Activated naive CD4-positive, alpha-beta T cell treated with anti-CD3 and anti-CD28 coated beads for 36 hours (primary cell): ENCODE measurements at regions of chr2 and their contacts with region 1.

Region 1: DNA sequence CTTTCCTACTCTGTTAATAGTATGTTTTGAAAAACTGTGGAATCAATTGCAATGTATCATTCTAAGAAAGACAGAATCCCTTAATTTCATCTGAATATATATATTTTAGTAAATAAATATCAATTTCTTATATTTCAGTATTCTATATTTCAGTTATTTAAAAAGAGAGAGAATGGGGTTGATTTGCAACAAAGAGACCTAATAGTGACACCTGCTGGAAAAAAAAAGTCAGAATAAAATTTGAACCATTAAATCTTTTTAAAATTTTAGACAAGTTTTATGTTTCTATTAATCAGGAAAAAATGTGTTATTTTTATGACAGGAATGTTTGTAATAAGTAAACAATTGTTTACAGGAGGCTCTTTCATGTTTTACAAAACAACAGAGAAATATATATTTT is 20.7 kb upstream of the CCNT2 start:
- DNase-seq: no peak
- H3K4me3 Mint-ChIP-seq: no peak overlapping the region
- H3K27ac Mint-ChIP-seq: no peak overlapping the region
- H3K4me1 Mint-ChIP-seq: no peaks in the 10 kb centered on the region
- H3K27me3 Mint-ChIP-seq: no peaks in the 10 kb centered on the region

Region 2: GRCh38 chr2:133886735-133887660 is 1010.9 kb before region 1 on chr2:
- CTCF ChIA-PET with region 1: no interaction called
- intact Hi-C with region 1: loop called (anchors 10 kb)
- DNase-seq: peak; percentile 66
- H3K4me3 Mint-ChIP-seq: no peak overlapping the region
- H3K27ac Mint-ChIP-seq: no peak overlapping the region
- H3K4me1 Mint-ChIP-seq: no peaks in the 10 kb centered on the region
- H3K27me3 Mint-ChIP-seq: peaks cover 5% of the 10 kb centered on the region

Region 3: GRCh38 chr2:134027980-134028379 is 870.0 kb before region 1 on chr2:
- CTCF ChIA-PET with region 1: no interaction called
- intact Hi-C with region 1: no loop called
- DNase-seq: no peak
- H3K4me3 Mint-ChIP-seq: no peak overlapping the region
- H3K27ac Mint-ChIP-seq: no peak overlapping the region
- H3K4me1 Mint-ChIP-seq: no peaks in the 10 kb centered on the region
- H3K27me3 Mint-ChIP-seq: peaks cover 41% of the 10 kb centered on the region

Region 4: DNA sequence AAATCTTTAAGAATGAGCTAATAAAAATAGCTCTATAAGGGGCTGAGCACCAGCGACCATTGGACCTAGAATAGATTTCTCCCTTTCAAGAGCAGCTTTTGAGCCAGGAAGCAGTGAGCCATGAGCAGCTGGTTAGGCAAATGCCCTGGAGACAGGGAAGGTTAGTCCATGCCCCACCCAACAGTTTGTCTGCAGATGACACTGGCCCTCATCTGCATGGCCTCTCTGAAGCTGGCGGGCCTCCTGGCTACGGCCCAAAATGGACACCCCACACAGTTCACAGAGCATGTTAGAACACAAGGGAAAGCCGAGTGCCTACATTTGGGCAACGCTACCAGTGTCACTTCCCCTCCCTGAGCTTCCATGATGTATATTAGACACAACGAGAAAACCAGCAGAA is 443.0 kb before region 1 on chr2:
- CTCF ChIA-PET with region 1: interaction called, 7 read pairs
- intact Hi-C with region 1: loop called (anchors 1 kb)
- DNase-seq: no peak
- H3K4me3 Mint-ChIP-seq: no peak overlapping the region
- H3K27ac Mint-ChIP-seq: no peak overlapping the region
- H3K4me1 Mint-ChIP-seq: no peaks in the 10 kb centered on the region
- H3K27me3 Mint-ChIP-seq: no peaks in the 10 kb centered on the region

Region 5: DNA sequence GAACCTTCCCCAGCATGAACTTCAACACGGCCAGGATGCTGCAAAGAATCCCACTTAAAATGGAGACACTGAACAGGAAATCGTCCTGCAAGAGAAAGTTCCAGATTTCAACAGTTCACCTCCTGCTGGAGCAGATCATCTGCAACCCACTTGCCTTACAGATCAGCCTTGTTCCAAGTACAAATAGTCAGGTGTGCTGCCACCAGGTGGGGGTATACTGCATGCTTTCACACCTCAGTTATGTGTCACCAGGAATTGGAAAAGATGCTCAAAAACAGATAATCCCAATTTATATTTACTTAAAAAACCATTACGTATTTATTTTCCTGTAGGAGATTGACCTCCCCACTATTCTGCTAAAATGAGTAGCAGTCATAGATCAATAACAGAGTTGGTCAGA is 431.8 kb before region 1 on chr2:
- CTCF ChIA-PET with region 1: no interaction called
- intact Hi-C with region 1: loop called (anchors 2 kb)
- DNase-seq: peak; percentile 53
- H3K4me3 Mint-ChIP-seq: no peak overlapping the region
- H3K27ac Mint-ChIP-seq: no peak overlapping the region
- H3K4me1 Mint-ChIP-seq: no peaks in the 10 kb centered on the region
- H3K27me3 Mint-ChIP-seq: no peaks in the 10 kb centered on the region

Region 6: GRCh38 chr2:134574611-134575330 is 323.2 kb before region 1 on chr2:
- CTCF ChIA-PET with region 1: no interaction called
- intact Hi-C with region 1: loop called (anchors 5 kb)
- DNase-seq: no peak
- H3K4me3 Mint-ChIP-seq: no peak overlapping the region
- H3K27ac Mint-ChIP-seq: no peak overlapping the region
- H3K4me1 Mint-ChIP-seq: no peaks in the 10 kb centered on the region
- H3K27me3 Mint-ChIP-seq: no peaks in the 10 kb centered on the region

Region 7: DNA sequence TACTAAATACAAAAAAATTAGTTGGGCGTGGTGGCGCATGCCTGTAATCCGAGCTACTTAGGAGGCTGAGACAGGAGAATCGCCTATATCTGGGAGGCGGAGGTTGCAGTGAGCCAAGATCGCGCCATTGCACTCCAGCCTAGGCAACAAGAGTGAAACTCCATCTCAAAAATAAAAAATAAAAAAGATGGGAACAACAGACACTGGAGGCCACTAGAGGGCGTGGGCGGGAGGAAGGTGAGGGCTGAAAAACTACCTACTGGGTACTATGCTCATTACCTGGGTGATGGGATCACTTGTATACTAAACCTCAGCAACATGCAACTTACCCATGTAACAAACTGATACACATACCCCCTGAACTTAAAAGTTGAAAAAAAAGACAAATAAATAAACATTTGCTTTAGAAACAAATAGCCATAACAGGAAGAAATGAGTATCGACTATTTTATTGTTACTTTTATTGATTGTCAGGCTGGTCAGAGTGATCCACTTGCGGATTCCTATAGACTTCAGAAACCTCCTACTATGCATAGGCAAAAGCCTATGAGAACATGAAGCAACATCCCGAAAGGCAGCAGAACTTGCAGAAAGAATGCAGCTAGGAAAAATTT is 240.2 kb before region 1 on chr2:
- CTCF ChIA-PET with region 1: interaction called, 5 read pairs
- intact Hi-C with region 1: loop called (anchors 2 kb)
- DNase-seq: peak; percentile 57
- H3K4me3 Mint-ChIP-seq: no peak overlapping the region
- H3K27ac Mint-ChIP-seq: no peak overlapping the region
- H3K4me1 Mint-ChIP-seq: peaks cover 14% of the 10 kb centered on the region
- H3K27me3 Mint-ChIP-seq: no peaks in the 10 kb centered on the region

Region 8: DNA sequence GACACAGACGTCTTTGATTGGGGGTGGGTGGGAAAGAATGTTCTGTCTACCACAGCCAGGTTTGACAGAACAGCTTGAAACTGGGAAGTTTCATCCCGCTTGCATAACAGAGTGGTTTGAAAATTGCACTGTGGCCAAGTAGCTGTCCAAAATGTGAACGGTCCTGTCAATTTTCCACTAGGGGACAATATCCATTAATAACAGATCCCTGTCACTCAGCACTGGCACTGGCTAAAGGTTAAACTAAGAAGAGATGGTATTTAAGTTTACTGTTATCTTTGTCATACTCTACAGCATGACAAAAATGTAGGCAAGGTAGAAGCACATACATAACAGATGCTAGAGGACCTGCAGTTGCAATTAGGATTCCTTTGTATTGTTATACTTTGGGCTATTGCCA is 115.1 kb before region 1 on chr2:
- CTCF ChIA-PET with region 1: interaction called, 4 read pairs
- intact Hi-C with region 1: loop called (anchors 2 kb)
- DNase-seq: no peak
- H3K4me3 Mint-ChIP-seq: no peak overlapping the region
- H3K27ac Mint-ChIP-seq: no peak overlapping the region
- H3K4me1 Mint-ChIP-seq: peaks cover 10% of the 10 kb centered on the region
- H3K27me3 Mint-ChIP-seq: no peaks in the 10 kb centered on the region

Region 9: DNA sequence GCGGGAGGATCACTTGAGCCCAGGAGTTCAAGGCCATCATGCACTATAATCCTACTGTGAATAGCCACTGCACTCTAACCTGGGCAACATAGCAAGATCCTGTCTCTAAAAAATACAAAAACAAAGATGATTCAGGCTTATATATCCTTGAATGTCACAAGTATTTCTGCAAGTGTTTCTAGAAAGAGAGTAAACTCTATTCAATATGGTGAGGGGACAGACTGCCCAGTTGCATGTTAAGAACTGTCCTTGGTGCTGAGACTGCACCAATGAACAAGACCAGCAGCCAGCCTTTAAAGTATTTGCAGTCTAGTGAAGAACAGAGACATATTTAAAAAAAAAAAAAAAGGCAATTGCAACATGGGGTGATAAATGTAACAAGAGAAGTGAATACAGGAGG is 132.9 kb after region 1 on chr2:
- CTCF ChIA-PET with region 1: no interaction called
- intact Hi-C with region 1: no loop called
- DNase-seq: peak; percentile 14
- H3K4me3 Mint-ChIP-seq: no peak overlapping the region
- H3K27ac Mint-ChIP-seq: no peak overlapping the region
- H3K4me1 Mint-ChIP-seq: no peaks in the 10 kb centered on the region
- H3K27me3 Mint-ChIP-seq: no peaks in the 10 kb centered on the region

Region 10: GRCh38 chr2:135546436-135546835 is 648.5 kb after region 1 on chr2:
- CTCF ChIA-PET with region 1: no interaction called
- intact Hi-C with region 1: no loop called
- DNase-seq: no peak
- H3K4me3 Mint-ChIP-seq: no peak overlapping the region
- H3K27ac Mint-ChIP-seq: no peak overlapping the region
- H3K4me1 Mint-ChIP-seq: peaks cover 6% of the 10 kb centered on the region
- H3K27me3 Mint-ChIP-seq: no peaks in the 10 kb centered on the region